Activated CD4-positive, alpha-beta memory T cell treated with anti-CD3 and anti-CD28 coated beads for 36 hours (primary cell): ENCODE measurements at regions of chr9 and their contacts with region 1.

Region 1: DNA sequence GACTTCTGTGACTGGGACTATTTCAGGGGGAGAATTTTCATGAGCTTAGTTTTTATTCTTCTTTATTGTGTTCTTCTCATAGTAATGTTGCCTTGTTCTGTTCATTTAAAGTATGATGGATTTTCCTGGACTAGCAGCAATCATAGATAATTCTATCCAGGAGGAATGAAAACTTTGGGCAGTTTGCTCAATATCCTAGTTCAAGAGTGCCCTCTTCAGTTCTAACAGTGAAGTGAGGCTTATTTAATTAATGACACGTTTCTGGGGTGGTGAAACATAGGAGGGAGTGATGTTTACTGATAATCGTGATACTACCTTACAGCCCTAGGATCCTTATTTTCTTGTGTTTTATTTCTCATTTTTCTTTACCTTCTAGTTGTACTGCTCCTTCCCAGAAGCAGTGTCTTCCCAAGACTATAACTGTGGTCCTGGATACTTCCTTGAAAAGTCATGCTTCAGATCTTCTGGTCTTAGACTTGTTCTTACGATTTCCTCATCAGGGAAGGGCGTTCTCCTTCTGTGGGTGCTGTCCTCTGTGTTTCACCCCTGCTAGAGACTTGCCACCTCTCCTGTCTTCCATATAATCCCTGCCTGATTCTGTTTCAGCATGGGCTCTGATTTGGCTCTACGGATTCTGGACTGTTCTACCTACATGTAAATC is 57.4 kb downstream of the CFAP95 start:
- DNase-seq: no peak
- H3K4me3 Mint-ChIP-seq: no peak overlapping the region
- H3K27ac Mint-ChIP-seq: no peak overlapping the region
- H3K4me1 Mint-ChIP-seq: no peaks in the 10 kb centered on the region
- H3K27me3 Mint-ChIP-seq: peaks cover 5% of the 10 kb centered on the region

Region 2: GRCh38 chr9:69672596-69673310 is 205.2 kb before region 1 on chr9:
- CTCF ChIA-PET with region 1: interaction called, 5 read pairs
- POLR2A ChIA-PET with region 1: no interaction called
- intact Hi-C with region 1: loop called (anchors 1 kb)
- DNase-seq: peak; percentile 81
- H3K4me3 Mint-ChIP-seq: peak overlapping the region; percentile 69
- H3K27ac Mint-ChIP-seq: no peak overlapping the region
- H3K4me1 Mint-ChIP-seq: peaks cover 16% of the 10 kb centered on the region
- H3K27me3 Mint-ChIP-seq: peaks cover 22% of the 10 kb centered on the region

Region 3: GRCh38 chr9:69809304-69809863 is 68.6 kb before region 1 on chr9:
- CTCF ChIA-PET with region 1: no interaction called
- POLR2A ChIA-PET with region 1: no interaction called
- intact Hi-C with region 1: loop called (anchors 2 kb)
- DNase-seq: peak; percentile 20
- H3K4me3 Mint-ChIP-seq: no peak overlapping the region
- H3K27ac Mint-ChIP-seq: no peak overlapping the region
- H3K4me1 Mint-ChIP-seq: no peaks in the 10 kb centered on the region
- H3K27me3 Mint-ChIP-seq: peaks cover 6% of the 10 kb centered on the region